Activated CD4-positive, alpha-beta memory T cell treated with anti-CD3 and anti-CD28 coated beads for 36 hours (primary cell): ENCODE measurements at regions of chr6 and their contacts with region 1.

Region 1: GRCh38 chr6:4788953-4789584 is 12.9 kb downstream of the CDYL start:
- DNase-seq: no peak
- H3K4me3 Mint-ChIP-seq: no peak overlapping the region
- H3K27ac Mint-ChIP-seq: no peak overlapping the region
- H3K4me1 Mint-ChIP-seq: peaks cover 55% of the 10 kb centered on the region
- H3K27me3 Mint-ChIP-seq: no peaks in the 10 kb centered on the region

Region 2: DNA sequence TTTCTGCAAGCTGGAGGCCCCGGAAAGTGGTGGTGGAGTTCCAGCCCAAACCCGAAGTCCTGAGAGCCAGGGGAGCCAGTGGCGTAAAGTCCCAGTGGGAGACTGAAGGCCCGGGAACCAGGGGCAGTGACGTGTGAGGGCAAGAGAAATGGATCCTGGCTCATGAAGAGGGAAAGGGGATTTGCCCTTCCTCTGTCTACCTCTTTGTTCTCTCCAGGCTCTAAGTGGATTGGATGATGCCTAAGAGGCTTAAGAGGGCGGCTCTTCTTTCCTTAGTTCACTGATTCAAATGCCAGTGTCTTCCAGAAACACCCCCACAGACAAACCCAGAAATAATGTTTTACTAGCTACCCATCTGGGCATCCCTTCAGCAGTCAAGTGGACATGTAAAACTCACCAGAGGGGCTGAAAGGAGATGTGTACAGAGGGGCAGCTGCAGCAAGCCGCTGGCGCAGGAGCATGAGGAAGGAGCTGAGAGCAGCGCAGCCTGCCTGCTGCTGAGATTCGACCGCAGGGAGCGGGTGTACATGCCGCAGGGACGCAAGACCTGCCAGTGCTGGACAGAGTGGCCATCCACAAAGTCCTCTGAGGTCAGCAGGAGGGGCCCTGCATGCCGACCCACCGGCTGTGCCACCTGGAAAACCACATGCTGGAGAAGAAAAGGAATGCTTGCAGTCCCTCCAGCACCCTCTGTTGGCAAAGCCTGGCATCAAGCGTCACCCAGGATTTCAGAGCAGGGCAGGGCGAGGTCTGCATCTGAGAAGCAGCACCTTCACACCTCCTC is 16.7 kb after region 1 on chr6:
- CTCF ChIA-PET with region 1: interaction called, 8 read pairs
- POLR2A ChIA-PET with region 1: interaction called, 4 read pairs
- intact Hi-C with region 1: loop called (anchors 2 kb)
- DNase-seq: peak; percentile 44
- H3K4me3 Mint-ChIP-seq: no peak overlapping the region
- H3K27ac Mint-ChIP-seq: no peak overlapping the region
- H3K4me1 Mint-ChIP-seq: peaks cover 80% of the 10 kb centered on the region
- H3K27me3 Mint-ChIP-seq: no peaks in the 10 kb centered on the region